Lower leg skin (tissue), 4 donors: ENCODE measurements at regions of chr3 and their contacts with region 1.

Region 1: DNA sequence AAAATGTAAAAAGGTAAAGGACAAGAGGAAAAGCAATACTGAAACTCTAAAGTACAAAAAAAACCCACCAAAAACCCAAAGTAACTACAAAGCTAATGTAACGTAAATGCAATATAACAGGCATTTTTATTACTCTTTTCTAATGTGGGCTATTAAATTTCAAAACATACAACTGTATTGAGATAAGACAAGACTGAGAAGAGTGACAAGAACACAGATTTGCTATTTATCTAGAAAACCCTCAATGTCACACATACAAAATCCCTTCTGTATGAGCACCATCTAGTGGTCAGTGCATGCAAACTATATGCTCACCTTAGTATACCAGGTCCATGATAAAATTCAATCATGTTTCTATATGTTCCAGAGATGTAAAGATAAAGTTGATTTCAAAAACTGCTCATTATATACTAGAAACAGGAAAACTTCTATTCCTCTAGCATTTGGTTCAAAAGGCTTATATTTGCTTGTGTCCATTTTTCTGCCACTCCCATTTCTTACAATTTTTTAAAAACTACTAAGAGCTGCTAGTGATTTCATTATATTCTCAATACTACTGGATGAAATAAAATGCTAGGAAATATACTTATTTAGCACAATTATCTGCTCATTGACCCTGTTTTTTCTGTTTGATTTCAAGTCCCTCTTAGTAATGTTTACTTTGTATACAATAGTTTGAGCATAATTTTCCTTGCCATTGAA is 111.4 kb downstream of the DLG1 start:
- DNase-seq: peak in 1 of 2 donors; percentile 23
- H3K4me3 ChIP-seq: no peak overlapping the region
- CTCF ChIP-seq: no peak
- POLR2A ChIP-seq: no peak

Region 2: GRCh38 chr3:196749125-196749524 is 437.9 kb before region 1 on chr3:
- intact Hi-C with region 1: no loop called
- DNase-seq: no peak
- H3K4me3 ChIP-seq: no peak overlapping the region
- CTCF ChIP-seq: no peak
- POLR2A ChIP-seq: no peak

Region 3: GRCh38 chr3:197002701-197003454 is 184.2 kb before region 1 on chr3:
- intact Hi-C with region 1: loop called (anchors 10 kb)
- DNase-seq: peak; percentile 43 to 95
- H3K4me3 ChIP-seq: peak overlapping the region; percentile 21
- CTCF ChIP-seq: no peak
- POLR2A ChIP-seq: no peak